ENCODE measurements at regions of chr9 and their contacts with region 1.

Region 1: GRCh38 chr9:114487607-114488300 is 17.5 kb downstream of the WHRN start:
- DNase-seq: no peak
- H3K4me3 ChIP-seq: no peak overlapping the region
- H3K27me3 ChIP-seq: no peaks in the 10 kb centered on the region
- CTCF ChIP-seq: peak; percentile 90

Region 2: GRCh38 chr9:114434878-114435311 is 52.9 kb before region 1 on chr9:
- CTCF ChIA-PET with region 1: interaction called, 20 read pairs
- POLR2A ChIA-PET with region 1: no interaction called
- DNase-seq: no peak
- H3K4me3 ChIP-seq: no peak overlapping the region
- H3K27me3 ChIP-seq: peaks cover 3% of the 10 kb centered on the region; the same call in 1 of the 2 replicates
- CTCF ChIP-seq: peak; percentile 67

Region 3: DNA sequence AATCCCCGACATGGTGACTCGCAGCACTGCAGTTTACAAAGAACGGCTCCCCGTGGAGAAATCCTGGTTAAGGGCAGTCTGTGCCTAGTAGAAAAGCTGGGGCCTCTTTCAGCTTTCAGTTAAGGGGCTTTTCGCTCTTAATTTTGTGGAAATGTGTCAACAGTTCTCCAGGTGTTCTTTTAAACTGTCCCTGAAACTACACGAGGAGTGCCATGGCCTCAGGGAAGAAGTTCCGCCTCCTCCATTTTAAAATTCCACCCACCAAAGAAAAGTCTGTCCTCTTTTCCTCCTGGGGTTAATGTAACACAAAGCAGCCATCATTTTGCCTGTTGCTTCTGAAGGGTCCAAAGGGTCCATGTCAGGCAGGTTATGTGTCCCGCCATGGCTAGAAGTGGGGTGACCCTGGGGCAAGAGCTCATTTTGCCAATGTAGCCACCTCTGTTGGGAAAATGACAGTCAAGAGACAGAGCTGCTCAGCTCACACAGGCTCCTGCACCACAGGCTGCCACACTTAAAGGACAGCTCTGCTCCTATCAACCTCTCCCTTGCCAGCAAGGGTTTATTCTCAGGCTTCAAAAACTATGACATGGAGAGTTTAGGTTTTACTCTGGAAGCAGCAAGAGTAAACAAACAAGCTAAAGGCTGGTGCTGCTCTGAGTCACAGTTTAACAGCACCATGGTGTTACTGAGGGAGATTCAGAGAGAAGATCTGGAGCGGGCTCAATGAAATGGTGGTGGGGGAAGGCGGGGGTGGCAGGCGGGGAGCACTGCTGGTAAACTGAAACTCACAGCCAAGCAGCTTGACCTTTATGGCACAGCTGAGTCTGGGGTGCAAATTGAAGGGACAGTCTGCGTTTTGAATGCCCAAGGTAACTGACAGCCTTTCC is 14.3 kb after region 1 on chr9:
- CTCF ChIA-PET with region 1: interaction called, 25 read pairs
- POLR2A ChIA-PET with region 1: no interaction called
- DNase-seq: no peak
- H3K4me3 ChIP-seq: no peak overlapping the region
- H3K27me3 ChIP-seq: peaks cover 3% of the 10 kb centered on the region; the same call in 1 of the 2 replicates
- CTCF ChIP-seq: no peak

Region 4: GRCh38 chr9:114653556-114654159 is 165.9 kb after region 1 on chr9:
- CTCF ChIA-PET with region 1: interaction called, 55 read pairs
- POLR2A ChIA-PET with region 1: no interaction called
- DNase-seq: peak; percentile 25
- H3K4me3 ChIP-seq: no peak overlapping the region
- H3K27me3 ChIP-seq: no peaks in the 10 kb centered on the region
- CTCF ChIP-seq: peak; percentile 96

Region 5: GRCh38 chr9:114662081-114662989 is 174.6 kb after region 1 on chr9:
- CTCF ChIA-PET with region 1: interaction called, 11 read pairs
- POLR2A ChIA-PET with region 1: no interaction called
- DNase-seq: no peak
- H3K4me3 ChIP-seq: no peak overlapping the region
- H3K27me3 ChIP-seq: peaks cover 8% of the 10 kb centered on the region
- CTCF ChIP-seq: peak; percentile 89